ENCODE measurements at regions of chr6 and their contacts with region 1.

Region 1: DNA sequence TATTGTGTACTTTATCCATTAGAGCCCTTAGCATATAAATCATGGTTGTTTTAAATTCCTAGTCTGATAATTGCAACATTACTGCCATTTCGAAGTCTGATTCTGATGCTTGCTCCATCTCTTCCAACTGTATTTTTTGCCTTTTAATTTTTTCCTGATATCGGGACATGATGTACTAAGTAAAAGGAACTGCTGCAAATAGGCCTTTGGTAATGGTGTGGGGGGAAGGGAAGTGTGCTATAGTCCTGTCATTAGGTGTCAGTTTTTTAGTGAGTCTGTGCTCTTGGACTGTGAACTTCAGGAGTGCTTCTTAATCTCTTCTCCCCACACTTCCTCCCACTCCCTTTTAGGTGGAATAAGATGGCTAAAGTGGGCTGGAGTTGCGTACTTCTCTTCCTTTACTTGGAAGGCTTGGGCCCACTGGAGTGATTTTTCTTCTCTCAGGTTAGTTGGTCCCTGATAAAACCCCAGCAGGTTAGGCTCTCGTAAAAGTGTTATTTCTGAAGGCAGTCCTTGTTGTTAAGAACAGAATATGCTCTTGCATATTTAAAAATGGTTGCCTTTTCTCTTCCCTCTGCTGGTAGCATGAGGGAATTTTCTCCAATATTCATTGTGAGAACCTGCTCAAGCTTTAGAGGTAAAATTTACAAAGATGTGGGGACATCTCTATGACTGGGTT is 18.1 kb downstream of the STXBP5 start:
- DNase-seq: peak; percentile 20
- ATAC-seq: no peak
- H3K4me3 ChIP-seq: no peak overlapping the region
- H3K4me3 Mint-ChIP-seq: no peak overlapping the region
- H3K27ac ChIP-seq: no peak overlapping the region
- H3K27ac Mint-ChIP-seq: no peak overlapping the region
- H3K4me1 ChIP-seq: no peaks in the 10 kb centered on the region
- H3K4me1 Mint-ChIP-seq: peaks cover 18% of the 10 kb centered on the region
- H3K27me3 ChIP-seq: no peaks in the 10 kb centered on the region
- H3K27me3 Mint-ChIP-seq: no peaks in the 10 kb centered on the region
- CTCF ChIP-seq: peak; percentile 41

Region 2: DNA sequence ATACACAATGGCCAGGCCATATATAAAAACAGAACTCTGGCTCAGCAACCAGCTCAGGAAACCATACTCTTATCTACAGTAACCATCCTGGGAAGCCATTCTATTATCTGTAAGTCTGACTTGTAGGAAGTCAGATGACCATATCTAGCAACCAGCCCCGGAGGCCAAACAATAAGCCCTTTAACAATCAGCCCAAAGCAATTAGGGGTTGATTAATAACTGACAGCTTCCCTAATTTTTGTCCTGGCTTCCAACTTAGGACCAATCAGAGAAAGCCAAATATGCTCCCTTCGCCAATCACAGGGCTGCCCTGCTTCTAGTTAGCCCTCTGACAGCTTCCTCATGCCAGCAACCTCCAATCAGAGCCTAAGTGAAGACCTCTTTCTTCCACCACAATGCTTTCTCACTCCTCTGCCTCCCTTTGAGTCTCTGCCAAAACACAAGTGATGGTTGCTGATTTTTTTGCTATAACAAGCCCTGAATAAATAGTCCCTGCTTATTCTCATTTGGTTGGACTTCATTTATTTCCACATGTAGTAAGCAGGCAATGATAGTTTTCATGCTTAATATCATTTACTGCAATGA is 55.8 kb before region 1 on chr6:
- CTCF ChIA-PET with region 1: no interaction called
- POLR2A ChIA-PET with region 1: no interaction called
- intact Hi-C with region 1: loop called (anchors 10 kb)
- DNase-seq: no peak
- ATAC-seq: no peak
- H3K4me3 ChIP-seq: no peak overlapping the region
- H3K4me3 Mint-ChIP-seq: no peak overlapping the region
- H3K27ac ChIP-seq: no peak overlapping the region
- H3K27ac Mint-ChIP-seq: no peak overlapping the region
- H3K4me1 ChIP-seq: no peaks in the 10 kb centered on the region
- H3K4me1 Mint-ChIP-seq: no peaks in the 10 kb centered on the region
- H3K27me3 ChIP-seq: no peaks in the 10 kb centered on the region
- H3K27me3 Mint-ChIP-seq: no peaks in the 10 kb centered on the region
- CTCF ChIP-seq: no peak